ENCODE measurements at regions of chr2 and their contacts with region 1.

Region 1: DNA sequence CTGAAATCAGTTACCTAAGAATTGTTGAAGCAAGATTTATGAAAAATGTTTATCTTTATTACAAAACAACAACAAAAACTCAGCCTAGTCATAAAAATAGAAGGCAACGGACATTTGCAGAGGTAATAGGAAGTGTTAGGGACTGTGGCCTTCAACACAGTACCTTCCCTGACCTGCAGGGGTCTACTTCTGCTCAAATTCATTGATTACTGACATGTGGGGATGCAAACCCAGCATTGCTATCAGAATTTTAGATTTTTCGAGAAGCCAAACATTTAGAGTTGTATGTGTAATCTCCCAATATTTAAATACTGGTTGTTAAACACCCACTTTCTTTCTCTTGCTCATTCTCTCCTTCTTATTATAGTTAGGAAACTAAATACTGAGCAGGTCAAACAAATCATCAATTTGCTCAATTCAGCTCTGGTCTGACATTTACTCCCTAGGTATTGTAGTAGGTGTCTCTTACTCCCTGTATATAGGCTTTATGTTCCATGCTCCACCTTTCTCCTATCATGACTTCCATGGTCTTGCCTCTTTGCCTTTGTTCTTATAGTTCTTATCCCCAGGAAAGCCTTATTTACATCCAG is 198.5 kb downstream of the UBE2E3 start:
- DNase-seq: no peak
- H3K4me3 ChIP-seq: no peak overlapping the region
- H3K27ac ChIP-seq: no peak overlapping the region
- H3K4me1 ChIP-seq: no peaks in the 10 kb centered on the region
- H3K27me3 ChIP-seq: no peaks in the 10 kb centered on the region
- CTCF ChIP-seq: peak in 2 of 3 experiments; percentile 49 to 76; a peak in 3 of 4 replicates
- EP300 ChIP-seq: no peak
- POLR2A ChIP-seq: no peak
- RAD21 ChIP-seq: peak; percentile 47 to 57; a peak in 3 of 4 replicates

Region 2: GRCh38 chr2:181190711-181191110 is 11.8 kb after region 1 on chr2:
- CTCF ChIA-PET with region 1: interaction called, 48 read pairs
- POLR2A ChIA-PET with region 1: no interaction called
- DNase-seq: no peak
- H3K4me3 ChIP-seq: no peak overlapping the region
- H3K27ac ChIP-seq: no peak overlapping the region
- H3K4me1 ChIP-seq: no peaks in the 10 kb centered on the region
- H3K27me3 ChIP-seq: no peaks in the 10 kb centered on the region
- CTCF ChIP-seq: no peak
- EP300 ChIP-seq: no peak
- POLR2A ChIP-seq: no peak
- RAD21 ChIP-seq: no peak

Region 3: GRCh38 chr2:181438261-181438660 is 259.3 kb after region 1 on chr2:
- CTCF ChIA-PET with region 1: no interaction called
- POLR2A ChIA-PET with region 1: no interaction called
- DNase-seq: no peak
- H3K4me3 ChIP-seq: no peak overlapping the region
- H3K27ac ChIP-seq: no peak overlapping the region
- H3K4me1 ChIP-seq: no peaks in the 10 kb centered on the region; a peak in 1 of 7 replicates
- H3K27me3 ChIP-seq: no peaks in the 10 kb centered on the region
- CTCF ChIP-seq: peak in 2 of 3 experiments; percentile 39 to 47; a peak in 3 of 4 replicates
- EP300 ChIP-seq: no peak
- POLR2A ChIP-seq: no peak
- RAD21 ChIP-seq: peak; percentile 32 to 51; a peak in 3 of 4 replicates